MCF 10A (cell line): ENCODE measurements at regions of chr1 and their contacts with region 1.

Region 1: DNA sequence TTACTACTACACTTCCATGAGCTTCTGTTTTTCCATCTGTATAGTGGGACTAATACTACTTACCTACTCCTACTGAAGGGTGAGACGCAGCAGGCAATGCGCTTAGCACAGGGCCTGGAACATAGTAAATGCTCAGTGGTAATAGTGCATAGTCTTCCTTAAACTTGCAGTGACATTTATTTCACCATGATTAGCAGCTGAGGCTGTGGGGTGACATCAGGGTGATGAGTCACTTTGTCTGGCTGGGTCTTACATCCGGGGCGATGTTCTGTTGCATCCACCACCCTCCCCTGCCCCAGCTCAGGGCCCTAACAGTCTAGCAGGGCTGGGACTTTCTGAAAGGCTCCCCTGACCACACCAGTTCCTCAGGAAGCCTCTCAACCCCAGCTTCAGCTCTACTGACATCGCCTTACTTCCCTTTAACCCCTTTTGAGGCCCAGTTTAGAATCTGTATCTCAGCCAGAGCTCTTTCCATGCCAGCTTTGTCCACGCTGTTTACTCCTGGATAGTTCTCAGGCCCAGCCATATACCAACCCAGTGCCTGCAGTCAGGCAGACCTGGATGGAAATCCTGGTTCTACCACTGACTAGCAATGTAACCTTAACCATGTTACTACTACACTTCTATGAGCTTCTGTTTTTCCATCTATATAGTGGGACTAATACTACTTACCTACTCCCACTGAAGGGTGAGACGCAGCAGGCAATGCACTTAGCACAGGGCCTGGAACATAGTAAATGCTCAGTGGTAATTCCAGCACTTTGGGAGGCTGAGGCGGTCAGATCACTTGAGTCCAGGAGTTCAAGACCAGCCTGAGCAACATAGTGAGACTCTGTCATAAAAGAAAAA is 66.3 kb downstream of the CD58 start:
- DNase-seq: peak; percentile 62
- H3K4me3 Mint-ChIP-seq: no peak overlapping the region
- H3K27ac Mint-ChIP-seq: peak overlapping the region; percentile 73
- H3K4me1 Mint-ChIP-seq: peaks cover 27% of the 10 kb centered on the region
- H3K27me3 Mint-ChIP-seq: no peaks in the 10 kb centered on the region
- CTCF ChIP-seq: no peak

Region 2: GRCh38 chr1:116538544-116538943 is 34.0 kb after region 1 on chr1:
- CTCF ChIA-PET with region 1: interaction called, 4 read pairs
- POLR2A ChIA-PET with region 1: interaction called, 4 read pairs
- intact Hi-C with region 1: loop called (anchors 1 kb)
- DNase-seq: peak; percentile 72
- H3K4me3 Mint-ChIP-seq: no peak overlapping the region
- H3K27ac Mint-ChIP-seq: peak overlapping the region; percentile 67
- H3K4me1 Mint-ChIP-seq: peaks cover 35% of the 10 kb centered on the region
- H3K27me3 Mint-ChIP-seq: no peaks in the 10 kb centered on the region
- CTCF ChIP-seq: no peak

Region 3: DNA sequence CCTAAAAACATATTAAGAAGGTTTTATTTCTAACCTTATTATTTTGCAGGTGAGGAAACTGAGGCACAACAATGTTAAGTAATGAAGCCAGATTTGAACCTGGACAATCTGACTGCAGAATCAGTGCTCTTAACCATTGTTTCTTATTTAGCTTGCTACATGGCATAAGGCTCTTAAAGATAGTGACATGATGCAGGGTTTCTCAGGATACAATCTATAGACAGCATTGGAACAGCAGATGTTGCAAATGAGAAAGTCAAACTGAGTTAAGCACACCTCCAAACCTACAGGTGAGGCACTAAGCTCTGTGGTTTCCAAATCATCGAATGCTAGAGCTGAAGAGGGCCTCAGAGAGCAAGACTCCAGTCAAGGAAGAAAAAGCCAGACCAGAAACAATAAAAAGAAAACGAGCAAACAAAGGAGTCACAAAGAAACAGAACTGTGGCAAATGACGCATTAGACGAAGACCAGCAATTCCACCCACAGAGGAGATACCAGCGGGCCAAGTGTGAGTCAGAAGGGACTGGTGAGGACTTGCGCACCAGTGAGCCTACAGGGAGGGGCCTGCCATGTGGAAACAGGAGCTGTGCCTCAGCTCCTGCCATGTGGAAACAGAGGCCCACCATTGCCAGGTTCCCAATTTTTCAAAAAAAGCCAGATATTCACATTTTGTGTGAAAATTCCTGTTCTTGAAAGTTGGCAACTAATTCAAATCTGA is 51.9 kb after region 1 on chr1:
- CTCF ChIA-PET with region 1: no interaction called
- POLR2A ChIA-PET with region 1: interaction called, 6 read pairs
- intact Hi-C with region 1: loop called (anchors 1 kb)
- DNase-seq: peak; percentile 99
- H3K4me3 Mint-ChIP-seq: peak overlapping the region; percentile 11
- H3K27ac Mint-ChIP-seq: peak overlapping the region; percentile 84
- H3K4me1 Mint-ChIP-seq: peaks cover 25% of the 10 kb centered on the region
- H3K27me3 Mint-ChIP-seq: no peaks in the 10 kb centered on the region
- CTCF ChIP-seq: no peak